HAP-1 (cell line): ENCODE measurements at regions of chr12 and their contacts with region 1.

Region 1: DNA sequence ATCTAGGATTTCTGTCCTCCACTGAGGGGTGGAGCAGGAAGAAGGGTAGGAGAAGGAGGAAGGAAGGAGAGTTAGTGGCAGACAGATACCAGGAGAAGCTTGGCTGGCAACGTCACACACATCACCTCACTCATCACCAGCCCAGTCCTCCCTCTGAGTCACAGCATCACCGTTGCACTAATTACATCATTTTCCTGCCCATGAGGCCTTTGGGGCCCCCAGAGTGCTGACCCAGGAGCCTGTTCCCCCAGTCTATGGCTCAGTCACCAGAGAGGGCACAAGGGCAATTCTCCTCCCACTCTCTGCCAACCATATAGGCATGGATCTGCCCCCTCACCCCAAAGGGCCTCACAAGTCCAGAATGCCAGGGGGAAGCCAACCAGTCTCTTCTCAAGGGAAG is 4.6 kb downstream of the RND1 start:
- DNase-seq: no peak
- H3K4me3 ChIP-seq: no peak overlapping the region
- H3K4me1 ChIP-seq: peaks cover 25% of the 10 kb centered on the region
- H3K27me3 ChIP-seq: no peaks in the 10 kb centered on the region

Region 2: GRCh38 chr12:48977315-48978281 is 116.5 kb after region 1 on chr12:
- in situ Hi-C with region 1: loop called (anchors 5 kb)
- DNase-seq: peak in 1 of 2 experiments; percentile 82
- H3K4me3 ChIP-seq: no peak overlapping the region
- H3K4me1 ChIP-seq: no peaks in the 10 kb centered on the region; the same call in 1 of the 2 replicates
- H3K27me3 ChIP-seq: peaks cover 16% of the 10 kb centered on the region